ENCODE measurements at regions of chr12 and their contacts with region 1.

Region 1: DNA sequence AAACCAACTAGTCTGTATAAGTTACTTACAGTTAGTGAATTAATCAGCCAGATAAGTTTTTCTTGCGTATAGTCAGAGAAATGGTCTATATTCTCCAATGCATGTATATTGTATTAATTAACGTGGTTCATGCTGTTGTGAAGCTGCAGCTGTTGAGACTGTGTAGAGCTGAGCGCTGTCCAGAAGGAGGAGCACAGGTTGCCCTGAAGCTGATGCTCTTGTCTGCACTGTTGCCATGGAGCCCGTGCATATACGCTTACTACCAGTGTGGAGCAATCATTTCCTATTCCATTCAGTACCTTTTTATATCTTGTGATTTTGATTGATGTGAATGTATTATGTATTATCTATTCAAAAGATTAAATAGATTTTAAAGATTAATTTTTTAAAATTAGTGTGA is 74.3 kb upstream of the ARID2 start:
- DNase-seq: peak in 8 of 9 donors; percentile 17 to 83 (median 70)
- ATAC-seq: peak; percentile 100
- H3K4me3 ChIP-seq: no peak overlapping the region
- H3K4me3 Mint-ChIP-seq: no peak overlapping the region
- H3K27ac ChIP-seq: no peak overlapping the region
- H3K27ac Mint-ChIP-seq: peak overlapping the region in 1 of 9 donors; percentile 30
- H3K4me1 ChIP-seq: no peaks in the 10 kb centered on the region
- H3K4me1 Mint-ChIP-seq: peaks cover 0 to 10% (median 7%) of the 10 kb centered on the region in 7 donors
- H3K27me3 ChIP-seq: no peaks in the 10 kb centered on the region
- H3K27me3 Mint-ChIP-seq: peaks cover 0 to 60% (median 5%) of the 10 kb centered on the region in 5 donors

Region 2: DNA sequence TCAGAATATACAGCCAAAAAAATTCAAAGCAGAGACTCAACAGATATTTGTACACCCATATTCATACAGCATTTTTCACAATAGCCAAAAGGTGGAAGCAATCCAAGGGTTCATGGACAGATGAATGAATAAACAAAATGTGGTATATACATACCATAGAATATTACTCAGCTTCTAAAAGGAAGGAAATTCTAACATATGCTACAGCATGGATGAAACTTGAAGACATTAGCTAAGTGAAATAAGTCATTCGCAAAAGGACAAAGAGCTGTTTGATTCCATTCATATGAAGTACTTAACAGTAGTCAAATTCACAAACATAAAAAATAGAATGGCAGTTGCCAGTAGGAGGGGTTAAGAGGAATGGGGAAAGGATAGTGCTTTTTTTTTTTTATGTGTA is 17.5 kb before region 1 on chr12:
- CTCF ChIA-PET with region 1: no interaction called
- POLR2A ChIA-PET with region 1: no interaction called
- intact Hi-C with region 1: no loop called
- DNase-seq: no peak
- ATAC-seq: no peak
- H3K4me3 ChIP-seq: no peak overlapping the region
- H3K4me3 Mint-ChIP-seq: no peak overlapping the region
- H3K27ac ChIP-seq: no peak overlapping the region
- H3K27ac Mint-ChIP-seq: no peak overlapping the region
- H3K4me1 ChIP-seq: no peaks in the 10 kb centered on the region
- H3K4me1 Mint-ChIP-seq: peaks cover 0 to 6% (median 5%) of the 10 kb centered on the region in 7 donors
- H3K27me3 ChIP-seq: no peaks in the 10 kb centered on the region
- H3K27me3 Mint-ChIP-seq: peaks cover 0 to 6% (median 0%) of the 10 kb centered on the region in 5 donors

Region 3: DNA sequence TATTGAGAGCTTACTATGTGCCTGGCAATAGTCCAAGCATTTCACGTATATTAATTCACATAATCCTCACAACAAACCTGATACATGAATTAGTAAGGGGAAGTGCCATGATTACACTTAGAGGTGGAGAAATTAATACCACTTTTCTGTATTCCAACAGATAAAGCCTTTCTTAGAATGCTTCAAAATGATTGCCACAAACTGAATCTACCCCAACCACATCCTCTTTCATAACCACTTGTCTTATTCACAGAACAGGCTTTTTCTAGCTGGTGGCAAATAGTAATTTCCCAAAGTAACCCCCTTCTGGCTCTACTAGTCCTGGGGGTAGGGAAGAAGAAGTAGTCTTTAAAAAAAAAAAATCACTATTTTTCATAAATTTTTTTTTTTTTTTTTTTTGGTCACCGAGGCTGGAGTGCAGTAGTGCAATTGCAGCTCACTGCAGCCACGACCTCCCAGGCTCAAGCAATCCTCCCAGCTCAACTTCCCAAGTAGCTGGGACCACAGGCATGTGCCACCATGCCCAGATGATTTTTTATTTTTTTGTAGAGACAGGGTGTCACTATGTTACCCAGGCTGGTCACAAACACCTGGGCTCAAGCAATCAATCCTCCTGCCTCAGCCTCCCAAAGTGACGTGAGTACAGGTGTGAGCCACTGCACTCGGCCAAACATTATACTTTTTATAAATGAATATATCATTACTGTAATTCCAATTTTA is 15.3 kb after region 1 on chr12:
- CTCF ChIA-PET with region 1: interaction called, 7 read pairs
- POLR2A ChIA-PET with region 1: interaction called, 4 read pairs
- intact Hi-C with region 1: loop called (anchors 1 kb)
- DNase-seq: peak in 7 of 9 donors; percentile 36 to 65 (median 47)
- ATAC-seq: peak; percentile 79
- H3K4me3 ChIP-seq: no peak overlapping the region
- H3K4me3 Mint-ChIP-seq: peak overlapping the region; percentile 3 to 76 (median 53)
- H3K27ac ChIP-seq: no peak overlapping the region
- H3K27ac Mint-ChIP-seq: peak overlapping the region in 2 of 9 donors; percentile 0 to 19
- H3K4me1 ChIP-seq: peaks cover 25 to 30% of the 10 kb centered on the region in 2 donors
- H3K4me1 Mint-ChIP-seq: peaks cover 13 to 39% (median 28%) of the 10 kb centered on the region in 7 donors
- H3K27me3 ChIP-seq: no peaks in the 10 kb centered on the region
- H3K27me3 Mint-ChIP-seq: peaks cover 0 to 7% (median 0%) of the 10 kb centered on the region in 5 donors

Region 4: GRCh38 chr12:45745861-45746277 is 90.7 kb after region 1 on chr12:
- CTCF ChIA-PET with region 1: interaction called, 23 read pairs
- POLR2A ChIA-PET with region 1: interaction called, 5 read pairs
- intact Hi-C with region 1: loop called in 1 of 2 experiments (anchors 1 kb)
- DNase-seq: peak in 6 of 9 donors; percentile 20 to 58 (median 45)
- ATAC-seq: peak; percentile 77
- H3K4me3 ChIP-seq: no peak overlapping the region
- H3K4me3 Mint-ChIP-seq: peak overlapping the region in 3 of 10 donors; percentile 12 to 33 (median 20)
- H3K27ac ChIP-seq: no peak overlapping the region
- H3K27ac Mint-ChIP-seq: peak overlapping the region in 2 of 9 donors; percentile 0 to 47
- H3K4me1 ChIP-seq: peaks cover 13 to 28% of the 10 kb centered on the region in 2 donors
- H3K4me1 Mint-ChIP-seq: peaks cover 44 to 83% (median 77%) of the 10 kb centered on the region in 7 donors
- H3K27me3 ChIP-seq: no peaks in the 10 kb centered on the region
- H3K27me3 Mint-ChIP-seq: no peaks in the 10 kb centered on the region

Region 5: GRCh38 chr12:45839917-45840316 is 184.7 kb after region 1 on chr12:
- CTCF ChIA-PET with region 1: no interaction called
- POLR2A ChIA-PET with region 1: no interaction called
- intact Hi-C with region 1: loop called in 1 of 2 experiments (anchors 10 kb)
- DNase-seq: no peak
- ATAC-seq: no peak
- H3K4me3 ChIP-seq: no peak overlapping the region
- H3K4me3 Mint-ChIP-seq: no peak overlapping the region
- H3K27ac ChIP-seq: no peak overlapping the region
- H3K27ac Mint-ChIP-seq: peak overlapping the region in 1 of 9 donors; percentile 10
- H3K4me1 ChIP-seq: no peaks in the 10 kb centered on the region
- H3K4me1 Mint-ChIP-seq: peaks cover 0 to 3% (median 0%) of the 10 kb centered on the region in 7 donors
- H3K27me3 ChIP-seq: no peaks in the 10 kb centered on the region
- H3K27me3 Mint-ChIP-seq: no peaks in the 10 kb centered on the region

Region 6: GRCh38 chr12:46702581-46703344 is 1047.6 kb after region 1 on chr12:
- CTCF ChIA-PET with region 1: no interaction called
- POLR2A ChIA-PET with region 1: no interaction called
- intact Hi-C with region 1: no loop called
- DNase-seq: no peak
- ATAC-seq: no peak
- H3K4me3 ChIP-seq: no peak overlapping the region
- H3K4me3 Mint-ChIP-seq: no peak overlapping the region
- H3K27ac ChIP-seq: no peak overlapping the region
- H3K27ac Mint-ChIP-seq: no peak overlapping the region
- H3K4me1 ChIP-seq: no peaks in the 10 kb centered on the region
- H3K4me1 Mint-ChIP-seq: no peaks in the 10 kb centered on the region
- H3K27me3 ChIP-seq: no peaks in the 10 kb centered on the region
- H3K27me3 Mint-ChIP-seq: peaks cover 0 to 20% (median 4%) of the 10 kb centered on the region in 5 donors